B cell (primary cell): ENCODE measurements at regions of chr16 and their contacts with region 1.

Region 1: GRCh38 chr16:28291873-28292660 is at the start of gene SBK1:
- DNase-seq: peak; percentile 92
- ATAC-seq: peak; percentile 97
- H3K4me3 ChIP-seq: peak within 1 kb of the TSS; percentile 44 to 84 (median 65)
- H3K4me3 Mint-ChIP-seq: peak within 1 kb of the TSS; percentile 88
- H3K27ac ChIP-seq: peak within 1 kb of the TSS; percentile 11 to 52
- H3K27ac Mint-ChIP-seq: peak within 1 kb of the TSS; percentile 77
- H3K4me1 ChIP-seq: peaks cover 15 to 22% of the 10 kb centered on the region in 2 donors
- H3K4me1 Mint-ChIP-seq: peaks cover 15% of the 10 kb centered on the region
- H3K27me3 ChIP-seq: peaks cover 0 to 21% (median 10%) of the 10 kb centered on the region in 4 experiments
- H3K27me3 Mint-ChIP-seq: peaks cover 8% of the 10 kb centered on the region
- CTCF ChIP-seq: no peak
- total RNA-seq, gene SBK1: 1.2 and 1.3 TPM in 2 replicates

Region 2: DNA sequence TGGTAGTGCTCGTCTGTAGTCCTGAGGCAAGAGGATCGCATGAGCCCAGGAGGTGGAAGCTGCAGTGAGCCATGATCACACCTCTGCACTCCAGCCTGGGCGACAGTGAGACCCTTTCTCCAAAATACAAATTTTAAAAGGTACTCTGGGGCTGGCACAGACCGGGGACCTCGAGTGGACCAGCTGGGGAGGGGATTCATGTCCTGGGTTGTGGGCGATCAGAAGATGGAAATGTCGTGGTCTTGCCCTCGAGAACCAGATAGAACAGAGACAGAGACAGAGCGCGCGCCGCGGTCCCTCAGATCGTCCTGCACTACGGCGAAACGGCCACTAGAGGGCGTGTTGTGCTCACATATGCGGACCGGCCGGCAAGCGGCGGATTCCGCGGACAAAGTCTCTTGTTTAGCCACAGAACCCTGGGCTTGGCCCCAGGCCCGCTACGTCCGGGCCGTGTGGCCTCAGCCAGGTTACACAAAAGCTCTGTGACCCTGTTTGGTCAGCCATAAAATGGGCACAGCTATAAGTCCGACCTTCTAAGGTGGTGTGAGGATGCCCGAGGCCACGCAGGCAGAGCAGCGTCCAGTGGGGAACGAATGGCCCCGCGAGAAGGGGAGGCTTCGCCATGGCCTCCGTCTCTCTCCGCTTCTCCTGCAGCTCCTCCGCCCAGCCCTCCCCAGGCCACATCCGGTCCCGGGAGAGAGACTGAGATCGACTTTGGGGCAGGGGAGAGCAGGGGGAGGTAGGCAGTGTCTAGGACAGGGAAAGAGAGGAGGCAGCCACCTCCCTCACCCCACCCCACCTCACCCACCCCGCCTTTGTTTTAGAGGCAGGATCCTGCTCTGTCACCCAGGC is 14.3 kb before region 1 on chr16:
- CTCF ChIA-PET with region 1: interaction called, 9 read pairs
- POLR2A ChIA-PET with region 1: no interaction called
- intact Hi-C with region 1: loop called (anchors 2 kb)
- DNase-seq: peak; percentile 87
- ATAC-seq: peak; percentile 97
- H3K4me3 ChIP-seq: peak overlapping the region; percentile 7 to 51 (median 43)
- H3K4me3 Mint-ChIP-seq: peak overlapping the region; percentile 70
- H3K27ac ChIP-seq: no peak overlapping the region
- H3K27ac Mint-ChIP-seq: no peak overlapping the region
- H3K4me1 ChIP-seq: peaks cover 3 to 9% of the 10 kb centered on the region in 2 donors
- H3K4me1 Mint-ChIP-seq: peaks cover 10% of the 10 kb centered on the region
- H3K27me3 ChIP-seq: peaks cover 0 to 22% (median 4%) of the 10 kb centered on the region in 4 experiments
- H3K27me3 Mint-ChIP-seq: peaks cover 39% of the 10 kb centered on the region
- CTCF ChIP-seq: peak; percentile 98

Region 3: DNA sequence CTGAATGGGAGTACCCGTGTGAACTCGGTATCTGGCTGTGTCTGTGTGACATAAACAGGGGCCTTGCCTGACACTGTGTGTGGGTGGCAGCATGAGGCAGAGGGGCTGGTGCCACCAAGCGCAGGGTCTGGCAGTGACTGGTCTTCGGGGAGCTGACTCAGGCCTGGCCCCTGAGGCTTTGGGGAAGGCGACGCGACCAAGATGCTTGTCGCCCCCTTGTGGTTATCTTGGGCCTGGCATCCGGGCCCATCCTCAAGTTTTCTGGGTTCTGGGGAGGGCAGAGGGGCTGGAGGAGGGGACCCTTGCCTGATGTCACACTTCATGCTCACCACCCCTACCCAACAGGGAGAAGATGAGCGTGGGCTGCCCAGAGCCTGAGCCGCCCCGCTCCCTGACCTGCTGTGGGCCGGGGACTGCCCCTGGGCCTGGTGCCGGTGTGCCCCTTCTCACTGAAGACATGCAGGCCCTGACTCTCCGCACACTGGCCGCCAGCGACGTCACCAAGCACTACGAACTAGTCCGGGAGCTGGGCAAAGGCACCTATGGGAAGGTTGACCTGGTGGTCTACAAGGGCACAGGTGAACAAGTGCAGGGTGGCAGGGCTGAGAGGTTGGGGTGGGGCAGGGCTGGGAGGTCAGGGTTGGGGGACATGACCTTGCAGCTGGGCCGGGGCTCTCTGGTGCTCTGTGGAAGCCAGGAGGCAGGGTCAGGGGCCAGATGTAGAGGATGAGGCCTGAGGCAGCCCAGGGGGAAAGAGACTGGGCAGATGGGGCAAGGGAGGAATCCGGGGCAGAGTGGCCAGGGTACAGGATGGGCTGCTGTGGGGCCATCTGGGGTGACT is 25.2 kb after region 1 on chr16:
- CTCF ChIA-PET with region 1: interaction called, 9 read pairs
- POLR2A ChIA-PET with region 1: interaction called, 3 read pairs
- intact Hi-C with region 1: loop called (anchors 2 kb)
- DNase-seq: peak; percentile 80
- ATAC-seq: peak; percentile 67
- H3K4me3 ChIP-seq: no peak overlapping the region
- H3K4me3 Mint-ChIP-seq: no peak overlapping the region
- H3K27ac ChIP-seq: no peak overlapping the region
- H3K27ac Mint-ChIP-seq: no peak overlapping the region
- H3K4me1 ChIP-seq: peaks cover 0 to 10% of the 10 kb centered on the region in 2 donors
- H3K4me1 Mint-ChIP-seq: peaks cover 3% of the 10 kb centered on the region
- H3K27me3 ChIP-seq: no peaks in the 10 kb centered on the region
- H3K27me3 Mint-ChIP-seq: no peaks in the 10 kb centered on the region
- CTCF ChIP-seq: peak; percentile 89